ENCODE measurements at regions of chr14 and their contacts with region 1.

Region 1: GRCh38 chr14:73997108-73997943 is 21.8 kb downstream of the ENTPD5 start:
- DNase-seq: peak in 1 of 2 experiments; percentile 14
- H3K4me3 ChIP-seq: no peak overlapping the region
- H3K4me3 Mint-ChIP-seq: peak overlapping the region; percentile 42
- H3K27ac Mint-ChIP-seq: peak overlapping the region; percentile 69
- H3K4me1 ChIP-seq: peaks cover 45% of the 10 kb centered on the region
- H3K4me1 Mint-ChIP-seq: peaks cover 27% of the 10 kb centered on the region
- H3K27me3 ChIP-seq: no peaks in the 10 kb centered on the region
- H3K27me3 Mint-ChIP-seq: no peaks in the 10 kb centered on the region
- CTCF ChIP-seq: no peak

Region 2: DNA sequence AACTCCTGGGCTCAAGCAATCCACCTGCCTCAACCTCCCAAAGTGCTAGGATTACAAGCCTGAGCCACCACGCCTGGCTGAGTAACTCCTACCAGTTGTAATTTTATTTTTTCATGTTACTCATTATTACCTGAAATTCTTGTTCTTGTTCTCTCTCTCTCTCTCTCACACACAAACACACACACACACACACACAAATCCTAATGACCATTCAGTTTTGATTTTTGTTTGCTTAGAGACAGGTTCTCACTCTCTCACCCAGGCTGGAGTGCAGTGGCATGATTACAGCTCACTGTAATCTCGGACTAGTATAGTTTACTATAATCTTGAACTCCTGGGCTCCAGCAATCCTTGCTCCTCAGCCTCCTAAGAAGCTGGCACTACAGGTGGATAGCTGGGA is 322.3 kb before region 1 on chr14:
- CTCF ChIA-PET with region 1: no interaction called
- POLR2A ChIA-PET with region 1: interaction called, 10 read pairs
- intact Hi-C with region 1: no loop called
- DNase-seq: peak in 1 of 2 experiments; percentile 3
- H3K4me3 ChIP-seq: no peak overlapping the region
- H3K4me3 Mint-ChIP-seq: no peak overlapping the region
- H3K27ac Mint-ChIP-seq: no peak overlapping the region
- H3K4me1 ChIP-seq: no peaks in the 10 kb centered on the region
- H3K4me1 Mint-ChIP-seq: no peaks in the 10 kb centered on the region
- H3K27me3 ChIP-seq: no peaks in the 10 kb centered on the region
- H3K27me3 Mint-ChIP-seq: no peaks in the 10 kb centered on the region
- CTCF ChIP-seq: no peak

Region 3: GRCh38 chr14:74018586-74019407 is 21.5 kb after region 1 on chr14 and contains the starts of genes BBOF1 and ENTPD5:
- CTCF ChIA-PET with region 1: interaction called, 3 read pairs
- POLR2A ChIA-PET with region 1: interaction called, 4 read pairs
- intact Hi-C with region 1: loop called (anchors 2 kb)
- DNase-seq: peak; percentile 86 to 90
- H3K4me3 ChIP-seq: peak within 1 kb of the TSS; percentile 51
- H3K4me3 Mint-ChIP-seq: peak within 1 kb of the TSS; percentile 90
- H3K27ac Mint-ChIP-seq: peak within 1 kb of the TSS; percentile 90
- H3K4me1 ChIP-seq: peaks cover 10% of the 10 kb centered on the region
- H3K4me1 Mint-ChIP-seq: peaks cover under 1% of the 10 kb centered on the region
- H3K27me3 ChIP-seq: no peaks in the 10 kb centered on the region
- H3K27me3 Mint-ChIP-seq: no peaks in the 10 kb centered on the region
- CTCF ChIP-seq: no peak
- total RNA-seq, gene BBOF1: 0.66 and 0.91 TPM in 2 replicates
- total RNA-seq, gene ENTPD5: 9.1 and 9.3 TPM in 2 replicates

Region 4: DNA sequence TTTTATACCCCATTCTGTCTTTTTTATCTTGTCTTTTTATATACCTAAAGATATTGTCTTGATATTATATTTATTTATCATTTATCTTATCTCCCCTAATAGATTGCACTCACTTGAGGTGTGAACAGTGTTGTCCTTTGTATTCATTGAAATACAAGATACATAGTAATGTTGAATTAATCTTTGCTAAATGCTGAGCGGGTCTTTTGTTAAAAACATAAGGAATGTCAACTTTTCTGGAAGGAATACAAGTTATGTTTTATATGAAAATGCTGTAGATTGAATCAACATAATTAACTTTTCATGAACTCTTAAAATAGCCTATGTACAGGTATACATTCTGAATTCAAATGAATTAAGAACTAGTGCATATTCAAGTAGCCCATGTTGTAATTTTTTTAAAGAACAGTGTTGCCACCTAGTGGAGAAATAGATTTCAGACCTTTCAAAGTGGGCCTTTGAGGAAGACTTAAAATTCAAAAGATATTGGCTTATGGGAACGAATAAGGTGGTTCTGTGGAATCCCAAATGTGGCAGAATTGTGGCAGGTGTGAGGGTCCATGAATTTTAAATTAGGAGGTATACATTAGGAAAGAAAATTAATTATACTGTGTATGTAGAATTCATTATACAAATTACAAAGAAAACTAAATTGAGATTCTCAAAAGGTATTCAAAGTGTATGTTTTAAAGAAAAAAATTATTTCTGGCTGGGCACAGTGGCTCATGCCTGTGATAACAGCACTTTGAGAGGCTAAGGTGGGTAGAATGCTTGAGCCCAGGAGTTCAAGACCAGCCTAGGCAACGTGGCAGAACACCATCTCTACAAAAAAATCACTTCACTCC is 40.9 kb after region 1 on chr14:
- CTCF ChIA-PET with region 1: no interaction called
- POLR2A ChIA-PET with region 1: no interaction called
- intact Hi-C with region 1: loop called (anchors 5 kb)
- DNase-seq: peak in 1 of 2 experiments; percentile 56
- H3K4me3 ChIP-seq: no peak overlapping the region
- H3K4me3 Mint-ChIP-seq: no peak overlapping the region
- H3K27ac Mint-ChIP-seq: no peak overlapping the region
- H3K4me1 ChIP-seq: no peaks in the 10 kb centered on the region
- H3K4me1 Mint-ChIP-seq: no peaks in the 10 kb centered on the region
- H3K27me3 ChIP-seq: no peaks in the 10 kb centered on the region
- H3K27me3 Mint-ChIP-seq: no peaks in the 10 kb centered on the region
- CTCF ChIP-seq: peak; percentile 65 to 70

Region 5: GRCh38 chr14:74048281-74048680 is 51.0 kb after region 1 on chr14:
- CTCF ChIA-PET with region 1: no interaction called
- POLR2A ChIA-PET with region 1: no interaction called
- intact Hi-C with region 1: no loop called
- DNase-seq: peak in 1 of 2 experiments; percentile 35
- H3K4me3 ChIP-seq: no peak overlapping the region
- H3K4me3 Mint-ChIP-seq: no peak overlapping the region
- H3K27ac Mint-ChIP-seq: no peak overlapping the region
- H3K4me1 ChIP-seq: no peaks in the 10 kb centered on the region
- H3K4me1 Mint-ChIP-seq: no peaks in the 10 kb centered on the region
- H3K27me3 ChIP-seq: no peaks in the 10 kb centered on the region
- H3K27me3 Mint-ChIP-seq: no peaks in the 10 kb centered on the region
- CTCF ChIP-seq: peak; percentile 11 to 29

Measured in Caco-2 (cell line).